Activated T-helper 1 cell treated with anti-CD3 and anti-CD28 coated beads, Interleukin-12 subunit alpha, Interleukin-12 subunit beta, Interleukin-2, Interleukin-4 antibody, amounts not matched to agents 30 ng/mL and 10 ng/mL and 1 ng/mL, durations not matched to agents 14 hours and 24 hours and 36 hours (primary cell): ENCODE measurements at regions of chr22 and their contacts with region 1.

Region 1: DNA sequence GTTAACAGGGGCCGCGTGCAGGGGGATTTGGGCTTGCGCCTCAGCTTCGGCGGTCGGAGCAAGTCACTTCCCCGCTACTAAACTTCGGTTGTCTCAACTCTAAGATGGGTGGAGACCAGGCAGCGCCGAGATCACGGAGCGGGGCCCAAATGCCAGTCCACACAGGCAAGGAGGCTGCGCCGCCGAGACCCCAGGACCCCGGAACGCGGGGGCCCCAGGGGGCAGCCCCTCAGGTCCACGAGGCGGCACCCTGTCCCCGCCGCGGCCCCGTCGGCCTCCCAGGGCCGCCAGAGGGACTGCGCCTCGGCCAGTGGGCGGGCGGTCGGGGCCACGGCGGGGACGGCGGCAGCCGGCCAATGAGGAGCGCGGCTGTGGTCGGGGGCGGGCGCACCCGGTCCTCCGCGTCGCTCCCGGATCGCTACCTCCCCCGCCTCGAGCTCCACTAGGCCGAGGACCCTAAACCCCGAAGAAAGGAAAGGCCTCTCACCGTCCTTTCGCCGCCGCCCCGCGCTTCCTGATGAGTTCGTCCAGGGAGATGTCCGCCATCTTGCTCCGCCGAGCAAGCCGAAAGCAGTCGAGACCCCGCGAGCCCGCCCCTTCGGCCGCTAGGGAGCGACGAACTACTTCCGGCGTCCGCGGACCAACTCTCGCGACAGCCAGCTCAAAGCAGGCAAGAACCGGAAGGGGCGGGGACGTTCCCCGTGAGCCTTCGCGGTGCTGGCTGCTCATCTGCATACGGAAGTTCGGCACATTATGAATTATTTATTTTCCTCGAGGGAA is at the start of gene POLDIP3:
- DNase-seq: peak; percentile 98
- H3K4me3 Mint-ChIP-seq: peak within 1 kb of the TSS; percentile 92
- H3K27ac Mint-ChIP-seq: peak within 1 kb of the TSS; percentile 98
- H3K4me1 Mint-ChIP-seq: peaks cover 33% of the 10 kb centered on the region
- H3K27me3 Mint-ChIP-seq: no peaks in the 10 kb centered on the region
- total RNA-seq, gene POLDIP3: 77.9 and 87.2 TPM in 2 replicates

Region 2: GRCh38 chr22:42500161-42500835 is 114.2 kb before region 1 on chr22:
- intact Hi-C with region 1: loop called (anchors 5 kb)
- DNase-seq: peak; percentile 73
- H3K4me3 Mint-ChIP-seq: peak overlapping the region; percentile 37
- H3K27ac Mint-ChIP-seq: no peak overlapping the region
- H3K4me1 Mint-ChIP-seq: peaks cover 16% of the 10 kb centered on the region
- H3K27me3 Mint-ChIP-seq: no peaks in the 10 kb centered on the region

Region 3: GRCh38 chr22:42581762-42582716 is 32.5 kb before region 1 on chr22:
- intact Hi-C with region 1: loop called (anchors 1 kb)
- DNase-seq: peak; percentile 77
- H3K4me3 Mint-ChIP-seq: peak overlapping the region; percentile 99
- H3K27ac Mint-ChIP-seq: peak overlapping the region; percentile 83
- H3K4me1 Mint-ChIP-seq: peaks cover 13% of the 10 kb centered on the region
- H3K27me3 Mint-ChIP-seq: no peaks in the 10 kb centered on the region

Region 4: DNA sequence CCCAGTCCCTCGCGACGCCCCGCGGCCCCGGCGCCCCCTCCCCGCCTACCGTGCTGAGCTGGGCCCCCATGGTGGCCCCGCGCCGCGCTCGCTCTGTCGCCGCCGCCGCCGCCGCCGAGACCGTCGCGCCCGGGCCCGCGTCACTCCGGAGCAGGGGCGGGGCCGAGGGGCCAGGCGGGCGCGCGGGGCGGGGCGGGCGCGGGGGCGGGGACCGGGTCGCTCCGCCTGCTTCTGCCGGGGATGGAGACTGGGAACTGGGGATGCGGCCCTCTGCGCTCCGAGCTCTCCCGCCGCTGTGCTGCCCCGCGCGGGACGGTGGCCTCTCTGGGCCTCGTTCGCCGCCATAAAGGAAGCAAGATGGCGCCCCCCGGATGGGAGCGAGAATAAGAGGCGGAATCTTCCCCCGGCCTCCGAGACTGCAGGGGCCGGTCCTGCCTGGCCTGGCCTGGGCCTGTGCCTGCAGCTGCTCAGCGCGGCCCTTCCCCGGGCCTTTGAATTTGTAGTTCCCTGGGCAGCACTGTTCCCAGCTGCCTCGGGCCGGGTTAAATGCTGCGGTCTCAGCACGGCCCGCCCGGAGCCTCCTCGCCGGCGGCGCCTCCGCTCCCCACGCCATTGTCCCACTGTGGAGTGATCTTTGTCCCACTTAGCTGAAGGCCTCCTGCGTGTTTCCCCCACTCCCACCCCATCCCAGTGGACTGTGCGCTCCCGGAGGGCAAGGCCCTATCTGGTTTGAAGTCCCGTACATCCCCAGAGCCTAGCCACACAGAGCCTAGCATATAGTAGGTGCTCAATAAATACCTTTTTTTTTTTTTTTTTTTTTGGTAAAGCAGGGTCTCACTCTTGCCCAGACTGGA is 35.0 kb after region 1 on chr22 and contains the start of gene CYB5R3:
- intact Hi-C with region 1: loop called (anchors 1 kb)
- DNase-seq: peak; percentile 68
- H3K4me3 Mint-ChIP-seq: peak within 1 kb of the TSS; percentile 97
- H3K27ac Mint-ChIP-seq: peak within 1 kb of the TSS; percentile 98
- H3K4me1 Mint-ChIP-seq: peaks cover 15% of the 10 kb centered on the region
- H3K27me3 Mint-ChIP-seq: no peaks in the 10 kb centered on the region
- total RNA-seq, gene CYB5R3: 69.8 and 75.1 TPM in 2 replicates

Region 5: GRCh38 chr22:43014869-43015676 is 400.6 kb after region 1 on chr22 and contains the start of gene PACSIN2:
- intact Hi-C with region 1: loop called (anchors 1 kb)
- DNase-seq: peak; percentile 99
- H3K4me3 Mint-ChIP-seq: peak within 1 kb of the TSS; percentile 92
- H3K27ac Mint-ChIP-seq: peak within 1 kb of the TSS; percentile 79
- H3K4me1 Mint-ChIP-seq: peaks cover 22% of the 10 kb centered on the region
- H3K27me3 Mint-ChIP-seq: peaks cover 9% of the 10 kb centered on the region
- total RNA-seq, gene PACSIN2: 30.5 and 31.7 TPM in 2 replicates